T-cell (primary cell): ENCODE measurements at regions of chr17 and their contacts with region 1.

Region 1: DNA sequence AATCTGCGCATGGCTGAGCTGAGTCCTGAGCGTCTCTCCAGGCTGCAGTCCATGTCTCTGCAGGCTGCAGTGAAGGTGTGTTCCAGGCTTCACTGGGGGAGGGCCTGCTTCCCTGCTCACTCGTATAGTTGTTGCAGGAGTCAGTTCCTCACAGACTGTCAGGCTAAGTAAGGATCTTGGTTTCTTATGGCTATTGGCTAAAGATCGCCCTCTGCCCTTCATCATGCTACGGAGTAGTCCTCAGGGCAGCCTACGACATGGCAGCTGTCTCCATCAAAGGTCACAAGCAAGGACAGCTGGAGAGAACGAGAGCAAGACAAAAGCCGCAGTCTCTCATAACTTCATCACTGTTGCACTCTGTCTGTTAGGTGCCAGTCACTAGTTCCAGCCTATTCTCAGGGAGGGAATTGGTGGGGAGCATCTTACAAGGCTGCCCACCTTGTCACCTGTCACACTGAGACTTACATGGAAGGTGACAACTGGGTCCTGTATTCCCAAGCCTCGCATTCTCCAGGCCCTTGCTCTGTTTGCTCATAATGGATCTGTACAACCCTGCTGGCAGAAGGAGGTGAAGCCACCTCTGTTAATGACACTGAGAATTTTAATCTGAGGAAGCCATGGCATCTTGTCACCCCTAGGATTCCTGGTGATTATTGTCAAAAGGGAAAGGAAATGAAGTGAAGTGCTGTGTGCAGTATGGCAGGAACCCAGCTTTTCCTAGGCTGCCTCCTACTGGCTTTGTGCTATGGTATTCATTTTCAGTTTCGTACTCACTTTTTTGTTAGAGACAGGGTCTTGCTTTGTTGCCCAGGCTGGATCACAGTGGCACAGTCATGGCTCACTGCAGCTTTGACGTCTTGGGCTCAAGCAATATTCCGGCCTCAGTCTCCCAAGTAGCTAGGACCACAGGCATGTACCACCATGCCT is 43.4 kb downstream of the MFSD11 start:
- DNase-seq: peak in 1 of 35 experiments; percentile 41
- ATAC-seq: peak in 2 of 4 experiments; percentile 32 to 61
- H3K4me3 ChIP-seq: no peak overlapping the region
- H3K4me3 Mint-ChIP-seq: no peak overlapping the region
- H3K27ac ChIP-seq: no peak overlapping the region
- H3K27ac Mint-ChIP-seq: no peak overlapping the region
- H3K4me1 ChIP-seq: no peaks in the 10 kb centered on the region
- H3K4me1 Mint-ChIP-seq: peaks cover 0 to 2% (median 0%) of the 10 kb centered on the region in 3 donors
- H3K27me3 ChIP-seq: no peaks in the 10 kb centered on the region
- H3K27me3 Mint-ChIP-seq: no peaks in the 10 kb centered on the region

Region 2: GRCh38 chr17:75838410-75838809 is 942.9 kb before region 1 on chr17:
- CTCF ChIA-PET with region 1: interaction called in 1 of 2 experiments, 11 read pairs
- POLR2A ChIA-PET with region 1: no interaction called
- DNase-seq: no peak
- ATAC-seq: no peak
- H3K4me3 ChIP-seq: no peak overlapping the region
- H3K4me3 Mint-ChIP-seq: no peak overlapping the region
- H3K27ac ChIP-seq: no peak overlapping the region
- H3K27ac Mint-ChIP-seq: peak overlapping the region in 1 of 2 donors; percentile 55
- H3K4me1 ChIP-seq: peaks cover 27 to 65% of the 10 kb centered on the region in 2 experiments
- H3K4me1 Mint-ChIP-seq: peaks cover 19 to 31% (median 26%) of the 10 kb centered on the region in 3 donors
- H3K27me3 ChIP-seq: no peaks in the 10 kb centered on the region
- H3K27me3 Mint-ChIP-seq: no peaks in the 10 kb centered on the region